Posterior cingulate gyrus (tissue), 11 donors: ENCODE measurements at regions of chr11 and their contacts with region 1.

Region 1: GRCh38 chr11:40183073-40184064 is 1276.1 kb downstream of the LRRC4C start:
- DNase-seq: no peak

Region 2: DNA sequence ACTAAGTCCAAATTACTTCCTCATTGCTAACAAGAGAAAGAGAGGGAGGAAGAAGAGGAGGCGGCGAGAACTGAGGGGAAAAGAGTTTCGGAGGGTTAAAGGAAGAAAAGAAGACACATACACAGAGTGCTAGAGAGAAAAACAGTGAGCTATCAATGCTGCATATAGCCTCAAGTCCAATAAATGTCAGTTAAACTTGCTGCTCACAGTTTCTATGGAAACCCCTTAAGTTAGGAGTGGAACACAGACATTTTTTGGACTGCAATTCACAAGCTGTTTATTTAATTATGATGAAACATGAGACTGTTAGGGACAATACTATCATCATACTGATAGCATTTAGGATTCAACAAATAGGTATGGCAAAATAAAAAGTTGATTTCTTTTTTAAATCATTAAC is 44.3 kb before region 1 on chr11:
- intact Hi-C with region 1: loop called (anchors 5 kb)
- DNase-seq: no peak

Region 3: DNA sequence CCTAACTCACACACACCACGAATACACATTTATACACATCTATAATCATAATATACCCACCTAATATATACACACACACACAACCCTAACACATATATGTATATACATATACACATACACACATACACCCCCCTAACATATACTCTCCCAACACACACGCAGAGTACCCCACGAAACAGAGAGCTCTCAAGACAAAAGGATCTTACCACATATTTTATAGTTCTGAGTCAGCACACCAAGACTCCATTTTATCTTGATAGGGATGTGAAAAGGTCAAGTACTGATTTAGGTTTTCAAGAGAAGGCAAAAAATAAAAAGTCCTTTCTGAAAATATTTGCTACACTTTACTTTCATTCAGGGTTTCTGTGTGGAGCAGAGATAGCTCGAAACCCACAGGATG is 68.9 kb after region 1 on chr11:
- intact Hi-C with region 1: no loop called
- DNase-seq: no peak

Region 4: GRCh38 chr11:40276960-40277359 is 93.6 kb after region 1 on chr11:
- intact Hi-C with region 1: loop called (anchors 5 kb)
- DNase-seq: no peak

Region 5: DNA sequence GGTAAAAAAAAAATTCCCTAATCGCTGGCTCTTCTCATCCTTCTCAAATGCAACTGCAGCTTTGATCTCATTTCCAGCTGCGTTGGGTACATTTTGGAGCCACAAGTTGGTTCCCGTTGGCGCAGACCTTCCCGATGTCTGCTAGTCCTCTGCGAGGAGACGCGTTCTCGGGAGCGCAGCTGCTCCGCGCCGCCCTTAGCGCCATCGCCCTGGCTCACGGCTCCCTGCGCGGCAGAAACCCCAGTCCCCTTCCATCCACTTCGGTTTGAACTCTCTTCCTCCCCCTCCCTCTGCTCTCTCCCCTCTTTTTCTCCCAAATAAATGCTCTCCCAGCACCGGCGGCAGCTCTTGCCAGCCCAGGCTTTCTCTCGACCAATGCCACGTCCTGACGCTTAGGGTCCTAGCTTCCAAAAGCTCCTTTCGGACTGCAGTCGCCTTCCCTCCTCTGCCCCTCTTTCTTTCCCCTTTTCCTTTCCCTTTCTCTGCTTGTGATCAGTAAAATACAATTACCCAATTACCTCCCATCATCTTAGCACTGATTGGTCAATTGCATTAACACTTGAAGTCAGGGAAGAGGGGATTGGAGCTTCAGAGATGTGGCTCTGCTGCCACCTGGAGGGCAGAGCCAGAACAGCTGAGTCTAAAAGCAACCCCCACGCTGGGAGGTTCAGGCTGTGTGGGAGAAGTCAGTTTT is 110.4 kb after region 1 on chr11:
- intact Hi-C with region 1: loop called (anchors 5 kb)
- DNase-seq: peak; percentile 67 to 97 (median 80)

Region 6: GRCh38 chr11:40417627-40418026 is 234.3 kb after region 1 on chr11:
- intact Hi-C with region 1: no loop called
- DNase-seq: no peak

Region 7: DNA sequence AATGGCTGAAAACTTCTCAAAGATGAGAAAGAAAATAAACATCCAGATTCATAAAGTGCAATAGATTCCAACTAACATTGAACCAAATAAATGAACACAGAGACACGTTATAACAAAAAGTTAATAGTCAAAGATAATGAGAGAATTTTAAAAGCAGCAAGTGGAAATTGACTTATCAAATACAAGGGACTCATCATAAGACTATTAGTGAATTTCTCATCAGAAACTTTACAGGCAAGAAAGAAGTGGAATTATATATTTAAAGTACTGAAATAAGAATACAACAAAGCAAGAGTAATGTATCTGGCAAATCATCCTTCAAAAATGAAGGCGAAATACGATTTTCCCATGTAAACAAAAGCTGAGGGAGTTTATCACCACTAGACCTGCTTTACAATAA is 423.4 kb after region 1 on chr11:
- intact Hi-C with region 1: no loop called
- DNase-seq: no peak

Region 8: DNA sequence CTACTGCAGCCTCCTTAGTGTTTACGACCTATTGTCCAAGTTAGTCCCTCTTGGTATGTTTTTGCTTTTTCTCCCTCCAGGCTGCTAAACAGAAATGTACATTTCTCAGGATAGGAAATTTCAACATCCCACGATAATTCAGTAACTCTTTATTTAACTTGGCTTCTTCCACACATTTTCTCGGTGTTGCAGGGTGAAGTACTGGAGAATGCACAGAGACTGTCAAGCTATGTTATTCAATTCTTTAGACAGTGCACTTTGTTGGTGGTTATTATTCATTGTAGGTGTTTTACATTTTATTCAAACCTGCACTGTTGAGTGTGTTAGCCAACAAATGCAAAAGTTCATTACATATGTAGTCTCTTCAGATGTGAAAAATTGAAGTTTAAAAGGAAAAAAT is 436.3 kb after region 1 on chr11:
- intact Hi-C with region 1: no loop called
- DNase-seq: no peak